ENCODE measurements at regions of chr3 and their contacts with region 1.

Region 1: GRCh38 chr3:64023187-64023848 is at the start of gene PSMD6:
- DNase-seq: peak; percentile 90 to 96 (median 91)
- H3K4me3 ChIP-seq: peak within 1 kb of the TSS; percentile 89 to 90
- H3K4me3 Mint-ChIP-seq: peak within 1 kb of the TSS; percentile 76 to 93 (median 90)
- H3K27ac ChIP-seq: peak within 1 kb of the TSS; percentile 89
- H3K27ac Mint-ChIP-seq: peak within 1 kb of the TSS; percentile 86 to 97 (median 95)
- H3K4me1 ChIP-seq: peaks cover 42% of the 10 kb centered on the region
- H3K4me1 Mint-ChIP-seq: peaks cover 17 to 39% (median 25%) of the 10 kb centered on the region in 4 donors
- H3K27me3 ChIP-seq: peaks cover 4% of the 10 kb centered on the region
- H3K27me3 Mint-ChIP-seq: peaks cover 4 to 6% of the 10 kb centered on the region in 2 donors
- total RNA-seq, gene PSMD6: 65.7 to 68.1 TPM

Region 2: GRCh38 chr3:63863148-63864007 is 159.9 kb before region 1 on chr3 and contains the starts of genes ATXN7 and THOC7:
- CTCF ChIA-PET with region 1: no interaction called
- POLR2A ChIA-PET with region 1: interaction called, 6 read pairs
- intact Hi-C with region 1: loop called (anchors 10 kb)
- DNase-seq: peak; percentile 65 to 80 (median 76)
- H3K4me3 ChIP-seq: peak within 1 kb of the TSS; percentile 68 to 71
- H3K4me3 Mint-ChIP-seq: peak within 1 kb of the TSS; percentile 91 to 97 (median 94)
- H3K27ac ChIP-seq: peak within 1 kb of the TSS; percentile 76
- H3K27ac Mint-ChIP-seq: peak within 1 kb of the TSS; percentile 83 to 94 (median 92)
- H3K4me1 ChIP-seq: peaks cover 40% of the 10 kb centered on the region
- H3K4me1 Mint-ChIP-seq: peaks cover 48 to 71% (median 57%) of the 10 kb centered on the region in 4 donors
- H3K27me3 ChIP-seq: no peaks in the 10 kb centered on the region
- H3K27me3 Mint-ChIP-seq: no peaks in the 10 kb centered on the region
- total RNA-seq, gene ATXN7: 153 to 160 TPM
- total RNA-seq, gene THOC7: 40.2 TPM

Region 3: DNA sequence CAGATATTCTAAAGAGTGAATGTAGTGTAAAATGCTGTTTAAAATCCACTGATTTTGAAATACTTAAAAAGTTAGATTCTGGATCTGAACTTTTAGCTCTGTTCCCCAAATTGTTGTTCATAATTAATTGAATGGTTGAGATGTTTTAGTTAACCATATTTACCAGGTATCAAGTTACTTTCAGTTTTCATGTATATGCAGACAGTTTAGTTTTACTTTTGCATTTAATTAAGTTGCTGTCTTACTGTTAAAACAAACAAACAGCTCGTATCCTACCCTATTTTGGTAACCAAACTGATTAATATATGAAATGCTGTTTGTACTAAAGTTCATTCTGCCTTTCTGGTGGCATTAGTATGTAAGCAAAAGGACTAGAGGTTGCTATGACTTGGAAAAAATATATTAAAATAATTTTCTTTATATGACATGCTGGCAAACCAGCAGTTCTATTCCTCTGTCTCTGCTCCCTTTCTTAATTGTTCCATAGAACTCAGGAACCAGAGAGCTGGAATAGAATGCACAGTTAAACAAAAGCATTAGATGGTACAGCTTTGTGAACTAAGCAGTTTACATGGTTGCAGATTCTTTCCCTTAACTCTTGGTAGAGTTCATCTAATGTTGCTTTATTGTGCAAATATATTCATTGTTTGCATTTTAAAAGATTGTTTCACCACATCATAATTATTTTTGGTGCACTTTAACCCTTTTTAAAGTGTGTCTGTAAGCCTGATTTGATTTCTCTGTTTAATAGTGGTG is 71.6 kb before region 1 on chr3:
- CTCF ChIA-PET with region 1: interaction called, 14 read pairs
- POLR2A ChIA-PET with region 1: interaction called, 5 read pairs
- intact Hi-C with region 1: no loop called
- DNase-seq: no peak
- H3K4me3 ChIP-seq: peak overlapping the region in 1 of 2 donors; percentile 17
- H3K4me3 Mint-ChIP-seq: peak overlapping the region; percentile 38 to 78 (median 62)
- H3K27ac ChIP-seq: peak overlapping the region; percentile 22
- H3K27ac Mint-ChIP-seq: peak overlapping the region; percentile 43 to 87 (median 72)
- H3K4me1 ChIP-seq: peaks cover 51% of the 10 kb centered on the region
- H3K4me1 Mint-ChIP-seq: peaks cover 37 to 63% (median 56%) of the 10 kb centered on the region in 4 donors
- H3K27me3 ChIP-seq: no peaks in the 10 kb centered on the region
- H3K27me3 Mint-ChIP-seq: no peaks in the 10 kb centered on the region

Region 4: DNA sequence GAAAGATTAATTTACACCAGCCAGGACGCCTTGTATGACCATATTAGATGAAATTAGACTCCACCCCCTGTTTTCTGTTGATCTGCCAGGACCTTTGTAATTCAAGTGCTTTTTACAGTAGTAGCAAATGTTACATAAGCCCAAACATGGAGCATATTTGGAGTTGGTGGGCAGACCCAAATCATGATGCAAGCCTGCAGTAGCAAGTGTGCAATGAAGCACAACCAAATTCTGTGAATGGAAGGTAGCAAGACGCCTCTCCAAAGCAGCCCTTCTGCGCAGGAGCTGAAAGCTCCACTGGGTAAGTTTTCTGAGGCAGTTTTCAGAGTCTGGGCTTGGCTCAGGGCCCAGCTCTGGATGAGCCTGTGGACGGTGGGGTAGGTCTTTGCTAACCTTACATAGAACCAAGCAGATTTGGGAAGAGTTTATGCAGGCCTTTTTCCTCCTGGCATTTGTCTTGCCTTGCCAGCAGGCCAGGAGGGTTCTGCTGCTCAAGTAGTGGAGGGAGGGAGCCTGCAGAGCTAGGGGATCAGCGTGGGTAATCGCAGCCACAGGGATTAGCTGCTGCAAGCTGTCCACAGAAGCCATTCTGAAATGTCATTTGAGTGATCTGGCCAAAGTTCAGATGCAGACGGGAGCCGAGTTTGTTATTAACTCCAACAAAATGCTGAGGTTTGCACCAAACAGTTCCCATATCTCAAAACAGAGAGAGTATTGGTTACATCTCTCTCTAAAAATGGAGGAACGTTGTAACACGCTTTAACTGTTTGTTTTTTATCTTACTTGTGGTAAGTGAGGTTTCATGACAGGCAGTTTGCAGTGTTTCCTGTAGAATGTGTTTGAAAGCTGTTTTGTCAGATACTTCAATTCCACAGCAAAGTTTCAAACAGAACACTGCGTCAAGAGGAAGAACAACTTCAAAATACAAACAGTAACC is 55.4 kb before region 1 on chr3:
- CTCF ChIA-PET with region 1: interaction called, 101 read pairs
- POLR2A ChIA-PET with region 1: interaction called, 42 read pairs
- intact Hi-C with region 1: loop called (anchors 1 kb)
- DNase-seq: peak; percentile 71 to 89 (median 85)
- H3K4me3 ChIP-seq: peak overlapping the region; percentile 65 to 93
- H3K4me3 Mint-ChIP-seq: peak overlapping the region; percentile 89 to 96 (median 92)
- H3K27ac ChIP-seq: peak overlapping the region; percentile 69
- H3K27ac Mint-ChIP-seq: peak overlapping the region; percentile 84 to 98 (median 95)
- H3K4me1 ChIP-seq: peaks cover 69% of the 10 kb centered on the region
- H3K4me1 Mint-ChIP-seq: peaks cover 48 to 82% (median 62%) of the 10 kb centered on the region in 4 donors
- H3K27me3 ChIP-seq: no peaks in the 10 kb centered on the region
- H3K27me3 Mint-ChIP-seq: no peaks in the 10 kb centered on the region

Region 5: GRCh38 chr3:63993653-63994079 is 29.7 kb before region 1 on chr3:
- CTCF ChIA-PET with region 1: interaction called, 10 read pairs
- POLR2A ChIA-PET with region 1: interaction called, 8 read pairs
- intact Hi-C with region 1: no loop called
- DNase-seq: peak; percentile 63 to 67 (median 66)
- H3K4me3 ChIP-seq: no peak overlapping the region
- H3K4me3 Mint-ChIP-seq: no peak overlapping the region
- H3K27ac ChIP-seq: no peak overlapping the region
- H3K27ac Mint-ChIP-seq: peak overlapping the region; percentile 7 to 89 (median 79)
- H3K4me1 ChIP-seq: peaks cover 7% of the 10 kb centered on the region
- H3K4me1 Mint-ChIP-seq: peaks cover 31 to 58% (median 43%) of the 10 kb centered on the region in 4 donors
- H3K27me3 ChIP-seq: no peaks in the 10 kb centered on the region
- H3K27me3 Mint-ChIP-seq: no peaks in the 10 kb centered on the region

Region 6: DNA sequence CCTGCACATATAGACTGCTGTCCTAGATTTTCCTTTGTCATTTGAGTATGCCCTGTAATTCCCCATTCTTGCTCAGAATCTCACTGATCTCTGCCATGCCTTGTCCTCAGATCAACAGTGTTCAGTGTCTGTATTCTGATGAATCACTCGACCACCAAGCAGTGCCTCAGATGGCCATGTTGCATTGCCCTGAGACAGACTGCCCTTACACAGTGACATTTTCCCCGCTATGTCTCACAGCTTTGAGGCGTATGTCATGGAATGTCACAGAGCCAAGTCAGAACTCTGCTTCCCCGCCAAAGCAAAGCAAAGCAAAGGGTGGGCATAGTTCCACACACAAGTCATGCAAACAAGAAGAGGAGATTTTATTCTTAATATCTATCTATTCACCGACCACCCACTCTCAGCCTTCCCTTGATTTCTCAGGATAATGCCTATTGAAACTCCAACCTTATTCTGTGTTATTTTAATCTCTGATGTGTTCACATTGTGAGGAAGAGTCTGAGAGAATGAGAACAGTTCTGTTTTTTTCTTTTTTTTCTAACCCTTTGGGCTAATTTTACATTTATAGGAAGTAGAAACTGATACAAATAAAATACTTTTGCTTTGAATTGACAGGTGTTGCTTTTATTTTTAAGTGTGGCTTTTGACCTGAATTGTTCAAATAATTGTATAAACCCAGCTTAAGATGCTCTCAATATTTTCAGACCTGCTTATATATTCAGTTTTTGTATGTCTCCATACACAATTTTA is 16.8 kb after region 1 on chr3:
- CTCF ChIA-PET with region 1: interaction called, 11 read pairs
- POLR2A ChIA-PET with region 1: no interaction called
- intact Hi-C with region 1: no loop called
- DNase-seq: no peak
- H3K4me3 ChIP-seq: no peak overlapping the region
- H3K4me3 Mint-ChIP-seq: no peak overlapping the region
- H3K27ac ChIP-seq: no peak overlapping the region
- H3K27ac Mint-ChIP-seq: no peak overlapping the region
- H3K4me1 ChIP-seq: no peaks in the 10 kb centered on the region
- H3K4me1 Mint-ChIP-seq: peaks cover 0 to 3% (median 0%) of the 10 kb centered on the region in 4 donors
- H3K27me3 ChIP-seq: no peaks in the 10 kb centered on the region
- H3K27me3 Mint-ChIP-seq: peaks cover 13 to 19% of the 10 kb centered on the region in 2 donors